ENCODE measurements at regions of chr2 and their contacts with region 1.

Region 1: DNA sequence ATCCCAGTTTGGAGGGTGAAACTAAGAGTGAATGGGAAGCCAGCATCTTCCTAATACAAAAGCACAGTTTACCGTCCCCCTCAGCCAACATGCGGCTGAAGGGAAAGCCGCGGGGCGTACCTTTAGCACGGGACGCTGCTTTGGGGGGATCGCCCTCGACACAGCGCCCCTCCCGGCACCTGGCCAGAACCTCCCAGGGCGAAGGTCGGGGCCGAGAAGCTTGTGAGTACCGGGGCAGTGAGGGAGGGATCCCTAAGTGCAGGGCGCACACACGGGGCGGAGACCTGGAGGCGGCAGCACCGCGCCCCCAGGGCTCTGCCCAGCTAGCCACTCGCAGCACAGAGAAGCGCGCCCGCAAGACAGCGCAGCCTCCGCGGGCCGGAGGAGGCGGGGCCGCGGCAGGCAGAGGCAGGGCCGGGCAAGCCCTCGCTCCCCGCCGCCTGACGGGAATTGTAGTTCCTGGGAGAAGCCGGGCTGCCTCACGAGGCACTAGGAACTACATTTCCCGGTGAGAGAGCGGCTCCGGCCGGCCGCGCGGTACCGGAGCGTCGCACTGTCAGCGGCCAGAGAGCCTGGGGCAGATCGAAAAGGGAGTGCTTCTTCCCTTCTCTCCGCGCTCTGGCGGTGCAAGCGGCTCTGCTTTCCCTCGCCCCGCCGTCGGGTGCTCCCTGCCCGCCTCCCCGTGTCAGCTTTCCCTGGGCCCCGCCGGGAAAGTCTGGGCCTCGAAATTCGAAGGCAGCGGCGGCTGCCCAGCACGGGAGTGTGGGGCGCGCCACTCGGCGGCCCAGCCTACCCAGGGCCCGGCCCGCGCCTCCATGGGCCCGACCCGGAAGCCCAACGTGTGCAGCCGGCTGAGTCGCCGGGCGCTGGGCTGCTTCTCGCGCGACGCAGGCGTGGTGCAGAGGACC is at the starts of genes DCAF17 and METTL8:
- DNase-seq: peak; percentile 98
- total RNA-seq, gene DCAF17: 12.4 TPM
- total RNA-seq, gene METTL8: 10.5 TPM

Region 2: GRCh38 chr2:170928824-170929685 is 505.0 kb before region 1 on chr2 and contains the start of gene GORASP2:
- intact Hi-C with region 1: loop called (anchors 5 kb)
- DNase-seq: peak; percentile 99
- total RNA-seq, gene GORASP2: 67.1 TPM

Region 3: GRCh38 chr2:170973492-170974303 is 460.3 kb before region 1 on chr2:
- intact Hi-C with region 1: loop called (anchors 5 kb)
- DNase-seq: peak; percentile 92

Region 4: DNA sequence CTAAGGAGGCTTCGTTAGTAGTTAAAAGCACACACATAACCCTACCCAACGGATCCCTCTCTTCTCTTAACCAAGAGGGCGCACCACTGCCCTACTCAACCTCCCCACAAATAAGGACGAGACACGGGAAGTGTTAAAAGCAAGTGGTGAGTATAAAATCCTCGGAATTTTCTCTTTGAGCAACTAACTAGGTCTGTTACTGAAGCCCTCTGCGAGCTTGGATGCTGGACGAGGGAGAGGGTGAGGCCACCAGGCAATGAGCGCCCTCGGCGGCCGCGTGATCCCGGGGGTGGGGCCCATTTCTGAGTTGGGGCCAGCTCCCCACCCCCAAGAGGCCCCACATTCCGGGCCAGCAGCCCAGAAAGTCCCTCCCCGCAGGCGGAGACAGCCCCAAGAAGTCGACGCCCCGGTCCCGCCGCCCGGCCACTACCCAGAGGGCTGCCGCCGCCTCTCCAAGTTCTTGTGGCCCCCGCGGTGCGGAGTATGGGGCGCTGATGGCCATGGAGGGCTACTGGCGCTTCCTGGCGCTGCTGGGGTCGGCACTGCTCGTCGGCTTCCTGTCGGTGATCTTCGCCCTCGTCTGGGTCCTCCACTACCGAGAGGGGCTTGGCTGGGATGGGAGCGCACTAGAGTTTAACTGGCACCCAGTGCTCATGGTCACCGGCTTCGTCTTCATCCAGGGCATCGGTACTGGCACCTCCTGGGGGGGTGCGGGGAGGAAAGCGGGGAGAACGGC is 88.2 kb after region 1 on chr2 and contains the start of gene CYBRD1:
- intact Hi-C with region 1: loop called (anchors 2 kb)
- DNase-seq: peak; percentile 91
- total RNA-seq, gene CYBRD1: 39.7 TPM

Region 5: GRCh38 chr2:171687287-171688128 is 253.5 kb after region 1 on chr2 and contains the start of gene DYNC1I2:
- intact Hi-C with region 1: loop called (anchors 10 kb)
- DNase-seq: peak; percentile 94
- total RNA-seq, gene DYNC1I2: 75.8 TPM